Activated CD4-positive, alpha-beta T cell treated with anti-CD3 and anti-CD28 coated beads for 36 hours (primary cell): ENCODE measurements at regions of chr7 and their contacts with region 1.

Region 1: DNA sequence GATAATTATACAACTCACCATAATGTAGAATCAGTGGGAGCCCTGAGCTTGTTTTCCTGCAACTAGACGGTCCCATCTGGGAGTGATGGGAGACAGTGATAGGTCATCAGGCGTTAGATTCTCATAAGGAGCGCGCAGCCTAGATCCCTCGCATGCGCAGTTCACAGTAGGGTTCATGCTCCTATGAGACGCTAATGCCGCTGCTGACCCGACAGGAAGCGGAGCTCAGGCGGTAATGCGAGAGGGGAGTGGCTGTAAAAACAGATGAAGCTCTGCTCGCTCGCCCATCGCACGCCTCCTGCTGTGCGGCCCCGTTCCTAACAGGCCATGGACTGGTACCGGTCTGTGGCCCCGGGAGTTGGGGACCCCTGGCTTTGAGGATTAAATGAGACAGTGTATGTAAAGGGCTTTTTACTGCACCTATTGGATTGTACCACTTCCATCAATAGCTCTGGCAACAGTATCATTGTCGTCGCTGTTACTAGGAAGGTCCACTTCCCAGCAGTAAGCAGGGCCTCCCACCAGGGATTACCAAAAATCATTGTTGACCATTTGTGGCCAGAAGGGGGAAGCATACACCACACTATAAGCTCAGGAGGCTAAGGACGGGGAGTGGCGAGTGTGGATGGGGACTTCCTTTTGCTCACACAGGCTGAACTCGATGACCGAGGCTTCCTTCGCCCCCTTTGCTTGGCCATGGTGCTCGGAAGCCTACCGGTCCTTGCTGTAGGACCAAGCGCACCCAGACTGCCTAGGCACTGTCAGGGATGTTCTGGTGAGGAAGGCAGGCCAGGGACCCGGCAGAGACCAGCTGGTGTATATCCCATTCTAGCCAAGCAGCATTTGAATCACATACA is 26.4 kb downstream of the AKR1B1 start:
- DNase-seq: peak; percentile 85
- ATAC-seq: peak; percentile 94
- H3K4me3 Mint-ChIP-seq: peak overlapping the region; percentile 69
- H3K27ac Mint-ChIP-seq: peak overlapping the region; percentile 84
- H3K4me1 Mint-ChIP-seq: peaks cover 10% of the 10 kb centered on the region
- H3K27me3 Mint-ChIP-seq: peaks cover 2% of the 10 kb centered on the region

Region 2: GRCh38 chr7:134058980-134059379 is 373.5 kb before region 1 on chr7:
- CTCF ChIA-PET with region 1: no interaction called
- POLR2A ChIA-PET with region 1: no interaction called
- intact Hi-C with region 1: no loop called
- DNase-seq: no peak
- ATAC-seq: no peak
- H3K4me3 Mint-ChIP-seq: no peak overlapping the region
- H3K27ac Mint-ChIP-seq: no peak overlapping the region
- H3K4me1 Mint-ChIP-seq: no peaks in the 10 kb centered on the region
- H3K27me3 Mint-ChIP-seq: no peaks in the 10 kb centered on the region

Region 3: DNA sequence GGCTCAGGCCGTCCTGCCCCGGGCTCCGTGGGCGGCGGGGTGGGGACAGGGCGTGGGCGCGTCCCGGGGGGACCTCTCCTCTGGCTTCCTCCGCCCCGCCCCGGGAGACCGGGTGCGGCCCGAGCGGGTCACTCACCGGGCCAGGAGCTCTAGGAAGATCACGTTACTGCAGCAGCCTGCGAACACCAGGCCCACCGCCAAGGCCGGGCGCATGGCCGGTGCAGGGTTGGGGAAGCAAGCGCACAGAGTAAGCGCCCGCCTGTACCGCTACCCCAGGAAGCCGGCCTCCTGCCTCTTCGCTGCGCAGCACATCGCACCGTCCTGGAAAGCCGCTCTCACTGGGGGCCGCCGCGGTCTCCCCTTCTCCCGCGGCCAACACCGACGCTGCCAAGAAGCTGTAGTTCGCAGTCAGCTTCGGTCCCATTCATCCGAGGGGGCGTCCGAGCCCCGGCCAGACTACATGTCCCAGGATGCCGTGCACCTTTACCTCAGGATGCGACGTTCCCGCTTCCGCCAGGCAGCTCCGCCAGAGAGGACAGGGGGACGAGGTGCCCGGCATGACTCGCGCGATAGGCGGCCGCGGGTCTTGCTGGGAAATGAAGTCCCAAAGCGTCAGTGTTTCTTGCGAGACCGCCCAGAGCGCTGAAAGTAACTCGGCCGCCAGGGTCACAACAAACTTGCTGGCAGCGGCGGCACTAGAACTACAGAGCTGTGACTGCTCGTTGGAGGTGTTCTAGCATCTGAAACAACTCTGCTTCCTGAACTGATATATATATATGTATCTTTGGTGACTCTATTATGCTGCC is 115.8 kb before region 1 on chr7 and contains the start of gene SLC35B4:
- CTCF ChIA-PET with region 1: interaction called, 4 read pairs
- POLR2A ChIA-PET with region 1: no interaction called
- intact Hi-C with region 1: loop called in 1 of 2 experiments (anchors 1 kb)
- DNase-seq: peak; percentile 97
- ATAC-seq: peak; percentile 100
- H3K4me3 Mint-ChIP-seq: peak within 1 kb of the TSS; percentile 85
- H3K27ac Mint-ChIP-seq: peak within 1 kb of the TSS; percentile 80
- H3K4me1 Mint-ChIP-seq: peaks cover 15% of the 10 kb centered on the region
- H3K27me3 Mint-ChIP-seq: peaks cover 6% of the 10 kb centered on the region
- total RNA-seq, gene SLC35B4: 13.6 to 15.5 TPM

Region 4: GRCh38 chr7:134458806-134459698 is 26.5 kb after region 1 on chr7 and contains the start of gene AKR1B1:
- CTCF ChIA-PET with region 1: interaction called, 30 read pairs
- POLR2A ChIA-PET with region 1: interaction called, 3 read pairs
- intact Hi-C with region 1: loop called (anchors 1 kb)
- DNase-seq: peak; percentile 94
- ATAC-seq: peak; percentile 92
- H3K4me3 Mint-ChIP-seq: peak within 1 kb of the TSS; percentile 83
- H3K27ac Mint-ChIP-seq: peak within 1 kb of the TSS; percentile 76
- H3K4me1 Mint-ChIP-seq: peaks cover 51% of the 10 kb centered on the region
- H3K27me3 Mint-ChIP-seq: no peaks in the 10 kb centered on the region
- total RNA-seq, gene AKR1B1: 88.1 to 120 TPM

Region 5: DNA sequence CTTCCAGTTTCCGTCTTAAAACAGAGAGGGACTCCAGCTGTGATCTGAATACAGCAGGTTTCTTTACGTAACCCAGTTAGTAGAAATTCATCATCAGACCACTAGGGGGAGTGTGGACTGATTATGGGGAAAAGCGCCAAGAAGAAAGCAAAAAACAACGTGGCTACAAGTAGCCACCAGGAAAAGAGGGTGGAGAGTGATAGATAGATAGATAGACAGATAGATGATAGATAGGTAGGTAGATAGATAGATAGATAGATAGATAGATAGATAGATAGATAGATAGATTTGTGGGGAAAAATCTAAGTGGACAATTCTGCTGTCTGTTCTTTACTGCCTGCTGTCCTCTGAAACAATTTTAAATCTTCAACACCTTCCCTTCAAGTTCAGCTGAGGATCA is 82.1 kb after region 1 on chr7:
- CTCF ChIA-PET with region 1: interaction called, 25 read pairs
- POLR2A ChIA-PET with region 1: no interaction called
- intact Hi-C with region 1: loop called (anchors 1 kb)
- DNase-seq: peak; percentile 15
- ATAC-seq: peak; percentile 77
- H3K4me3 Mint-ChIP-seq: no peak overlapping the region
- H3K27ac Mint-ChIP-seq: no peak overlapping the region
- H3K4me1 Mint-ChIP-seq: peaks cover 10% of the 10 kb centered on the region
- H3K27me3 Mint-ChIP-seq: peaks cover 5% of the 10 kb centered on the region

Region 6: DNA sequence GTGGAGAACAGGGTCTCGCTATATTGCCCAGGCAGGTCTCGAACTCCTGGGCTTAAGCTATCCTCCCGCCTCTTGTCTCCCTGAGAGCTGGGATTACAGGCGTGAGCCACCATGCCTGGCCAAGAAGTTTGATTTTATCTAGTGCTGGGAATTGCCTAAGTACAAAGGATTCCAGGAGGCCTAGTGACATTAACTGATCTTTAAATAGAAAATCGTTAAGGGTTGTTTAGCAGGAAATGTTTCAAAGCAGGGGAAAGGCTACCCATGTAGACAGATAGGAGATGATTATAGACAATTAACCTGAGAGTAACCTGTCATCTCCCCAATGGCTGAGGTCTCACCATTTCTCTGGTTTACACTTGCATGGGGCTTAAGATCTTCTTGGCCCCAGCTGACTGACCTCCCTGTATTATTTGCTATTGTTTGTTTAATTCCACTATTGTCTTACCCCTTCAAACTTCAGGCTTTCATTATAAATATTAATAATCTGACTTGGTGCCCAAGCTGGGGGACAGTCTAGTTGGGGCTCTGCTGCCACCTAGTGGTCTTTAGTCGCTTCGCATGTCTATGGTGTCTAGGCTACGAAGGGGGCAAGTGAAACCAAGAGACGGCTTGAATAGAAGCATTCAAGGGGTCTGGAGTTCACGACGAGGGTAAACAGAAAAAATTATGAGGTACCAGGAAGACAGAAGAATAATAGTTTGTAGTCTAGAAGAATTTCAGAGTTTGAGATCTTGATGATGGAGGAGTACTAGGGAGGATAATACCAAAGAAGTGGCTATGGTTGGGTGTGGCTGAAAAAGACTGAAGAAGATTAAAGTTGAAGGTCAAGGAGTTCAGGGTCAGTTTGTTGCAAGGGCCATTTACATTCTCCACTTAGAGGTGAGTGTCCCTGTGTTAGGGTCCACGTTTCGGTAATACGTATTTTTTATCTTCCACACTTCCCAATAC is 173.7 kb after region 1 on chr7:
- CTCF ChIA-PET with region 1: interaction called, 37 read pairs
- POLR2A ChIA-PET with region 1: no interaction called
- intact Hi-C with region 1: loop called (anchors 1 kb)
- DNase-seq: peak; percentile 78
- ATAC-seq: peak; percentile 93
- H3K4me3 Mint-ChIP-seq: peak overlapping the region; percentile 25
- H3K27ac Mint-ChIP-seq: no peak overlapping the region
- H3K4me1 Mint-ChIP-seq: peaks cover 3% of the 10 kb centered on the region
- H3K27me3 Mint-ChIP-seq: peaks cover 28% of the 10 kb centered on the region

Region 7: GRCh38 chr7:135247746-135248471 is 815.4 kb after region 1 on chr7:
- CTCF ChIA-PET with region 1: no interaction called
- POLR2A ChIA-PET with region 1: no interaction called
- intact Hi-C with region 1: no loop called
- DNase-seq: no peak
- ATAC-seq: no peak
- H3K4me3 Mint-ChIP-seq: no peak overlapping the region
- H3K27ac Mint-ChIP-seq: no peak overlapping the region
- H3K4me1 Mint-ChIP-seq: peaks cover 15% of the 10 kb centered on the region
- H3K27me3 Mint-ChIP-seq: no peaks in the 10 kb centered on the region